K562 (cell line): ENCODE measurements at regions of chr1 and their contacts with region 1.

Region 1: GRCh38 chr1:175154629-175155472 is 37.7 kb downstream of the KIAA0040 start:
- DNase-seq: peak; percentile 71 to 81 (median 80)
- ATAC-seq: peak; percentile 77
- H3K4me3 ChIP-seq: no peak overlapping the region
- H3K27ac ChIP-seq: no peak overlapping the region
- H3K4me1 ChIP-seq: no peaks in the 10 kb centered on the region
- H3K27me3 ChIP-seq: peaks cover 11 to 35% of the 10 kb centered on the region in 2 experiments
- CTCF ChIP-seq: peak; percentile 90 to 96 (median 95)
- EP300 ChIP-seq: no peak
- POLR2A ChIP-seq: no peak
- RAD21 ChIP-seq: peak; percentile 98 to 99

Region 2: GRCh38 chr1:174639461-174639860 is 515.4 kb before region 1 on chr1:
- CTCF ChIA-PET with region 1: no interaction called
- POLR2A ChIA-PET with region 1: no interaction called
- in situ Hi-C with region 1: no loop called
- intact Hi-C with region 1: no loop called
- DNase-seq: no peak
- ATAC-seq: no peak
- H3K4me3 ChIP-seq: no peak overlapping the region
- H3K27ac ChIP-seq: no peak overlapping the region
- H3K4me1 ChIP-seq: no peaks in the 10 kb centered on the region
- H3K27me3 ChIP-seq: no peaks in the 10 kb centered on the region
- CTCF ChIP-seq: no peak
- EP300 ChIP-seq: no peak
- POLR2A ChIP-seq: no peak
- RAD21 ChIP-seq: no peak

Region 3: DNA sequence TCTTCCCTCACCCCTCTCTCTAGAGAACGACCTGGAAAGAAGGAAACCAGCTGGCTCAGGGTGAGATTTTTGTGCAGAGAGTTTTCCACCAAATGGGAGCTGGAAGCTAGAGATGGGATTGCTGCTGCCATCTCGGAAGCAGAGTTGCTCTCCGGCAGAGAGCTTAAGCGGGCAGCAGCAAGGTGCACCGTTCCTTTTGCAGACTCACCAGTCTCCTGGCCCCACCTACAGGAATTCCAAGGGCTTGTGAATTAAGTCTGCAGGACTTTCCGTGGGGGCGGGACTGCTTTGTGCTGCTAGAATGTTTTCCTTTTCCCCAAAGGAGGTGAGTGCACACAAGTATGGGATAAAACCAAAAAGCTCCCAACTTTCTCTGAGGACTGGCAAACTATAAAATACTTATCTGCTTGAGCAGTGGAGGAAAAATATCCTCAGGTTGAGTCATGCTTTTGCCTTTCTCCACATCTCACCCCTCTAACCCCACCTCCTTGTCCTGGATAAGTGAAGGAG is 66.9 kb after region 1 on chr1:
- CTCF ChIA-PET with region 1: interaction called, 28 read pairs
- POLR2A ChIA-PET with region 1: interaction called, 3 read pairs
- in situ Hi-C with region 1: no loop called
- intact Hi-C with region 1: loop called (anchors 1 kb)
- DNase-seq: peak in 2 of 4 experiments; percentile 27 to 43
- ATAC-seq: peak; percentile 80
- H3K4me3 ChIP-seq: no peak overlapping the region
- H3K27ac ChIP-seq: no peak overlapping the region
- H3K4me1 ChIP-seq: peaks cover 0 to 3% of the 10 kb centered on the region in 2 experiments; a peak in 3 of 5 replicates
- H3K27me3 ChIP-seq: peaks cover 3 to 12% of the 10 kb centered on the region in 2 experiments; a peak in 1 of 5 replicates
- CTCF ChIP-seq: peak; percentile 47 to 84 (median 49); a peak in 5 of 6 replicates
- EP300 ChIP-seq: 0 out of 2 replicates have a peak, but pooled peaks have one; percentile 4
- POLR2A ChIP-seq: no peak
- RAD21 ChIP-seq: peak; percentile 73 to 78

Region 4: DNA sequence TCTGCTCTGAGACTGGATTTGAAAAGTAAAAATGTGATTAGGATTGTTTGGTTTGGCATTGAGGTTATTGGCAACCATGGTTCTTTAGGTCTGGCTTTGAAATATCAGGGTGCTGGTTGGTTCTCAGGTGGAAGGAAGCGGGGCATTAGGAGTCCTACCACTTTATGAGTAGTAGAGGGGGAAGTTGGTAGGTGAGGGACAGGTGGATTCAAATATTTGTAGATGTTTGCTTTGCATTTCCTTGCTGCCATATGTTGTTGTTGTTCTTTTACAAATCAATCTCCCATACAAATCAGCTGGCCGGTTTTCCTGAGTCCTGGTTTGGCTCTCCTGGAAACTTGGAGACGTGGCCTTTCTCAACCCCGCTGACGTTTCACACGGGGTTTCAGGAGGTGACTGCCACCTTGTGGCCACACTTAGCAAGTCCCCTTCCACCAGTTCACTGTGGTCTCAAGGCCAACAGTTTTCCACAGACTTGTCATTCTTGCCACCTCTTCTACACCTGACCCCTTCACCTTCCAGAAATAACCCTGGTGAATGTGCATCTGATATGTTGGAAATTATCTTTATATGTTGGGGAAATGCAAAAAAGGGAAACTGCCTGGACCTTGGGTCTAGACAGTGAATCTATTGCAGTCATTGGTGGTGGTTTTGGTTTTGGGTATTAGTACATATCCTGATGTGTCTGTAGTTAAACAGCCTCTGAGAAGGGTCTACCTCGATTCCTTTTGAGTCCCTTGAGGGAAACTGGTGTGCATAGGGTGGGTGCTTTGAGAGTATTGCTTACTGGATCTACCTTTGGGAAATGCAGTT is 164.8 kb after region 1 on chr1:
- CTCF ChIA-PET with region 1: interaction called, 49 read pairs
- POLR2A ChIA-PET with region 1: interaction called, 5 read pairs
- in situ Hi-C with region 1: no loop called
- intact Hi-C with region 1: loop called (anchors 1 kb)
- DNase-seq: peak; percentile 79 to 88 (median 82)
- ATAC-seq: peak; percentile 97
- H3K4me3 ChIP-seq: no peak overlapping the region
- H3K27ac ChIP-seq: no peak overlapping the region
- H3K4me1 ChIP-seq: no peaks in the 10 kb centered on the region
- H3K27me3 ChIP-seq: peaks cover 6 to 22% of the 10 kb centered on the region in 2 experiments; a peak in 3 of 5 replicates
- CTCF ChIP-seq: peak; percentile 84 to 96 (median 94)
- EP300 ChIP-seq: no peak
- POLR2A ChIP-seq: no peak
- RAD21 ChIP-seq: peak; percentile 95 to 97

Region 5: DNA sequence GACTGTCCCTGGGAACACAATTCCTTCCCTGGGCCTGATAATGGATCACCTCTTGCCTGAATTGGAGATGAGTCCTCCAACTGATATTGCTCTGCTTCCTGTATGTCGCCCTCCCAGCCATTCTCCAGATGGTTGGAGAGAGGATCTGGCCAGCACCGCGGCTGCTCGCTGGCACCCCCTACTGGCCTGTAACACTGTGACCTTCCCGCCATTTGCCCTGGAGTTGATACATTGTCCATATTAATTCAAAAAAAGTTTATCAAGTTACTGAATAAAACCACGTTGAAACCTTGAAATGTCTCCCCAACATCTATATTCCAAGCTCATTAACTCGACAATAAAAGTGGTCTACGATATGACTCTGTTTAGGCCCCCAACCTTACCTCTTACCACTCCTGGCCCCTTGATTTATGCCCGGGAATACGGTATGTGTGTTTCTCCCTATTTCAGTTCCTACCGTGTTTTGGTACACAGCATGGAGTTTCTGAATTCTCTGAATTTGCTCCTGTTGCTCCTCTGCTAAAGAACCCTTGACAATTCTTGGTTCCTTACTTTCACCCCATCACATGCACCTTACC is 279.5 kb after region 1 on chr1:
- CTCF ChIA-PET with region 1: no interaction called
- POLR2A ChIA-PET with region 1: no interaction called
- in situ Hi-C with region 1: no loop called
- intact Hi-C with region 1: loop called (anchors 5 kb)
- DNase-seq: peak; percentile 70 to 80 (median 73)
- ATAC-seq: peak; percentile 97
- H3K4me3 ChIP-seq: no peak overlapping the region
- H3K27ac ChIP-seq: no peak overlapping the region
- H3K4me1 ChIP-seq: no peaks in the 10 kb centered on the region
- H3K27me3 ChIP-seq: 0 out of 5 replicates have a peak, but pooled peaks cover 0 to 4% of the 10 kb centered on the region in 2 experiments
- CTCF ChIP-seq: peak; percentile 86 to 97 (median 89)
- EP300 ChIP-seq: no peak
- POLR2A ChIP-seq: no peak
- RAD21 ChIP-seq: peak; percentile 71 to 75

Region 6: GRCh38 chr1:176843352-176844297 is 1688.8 kb after region 1 on chr1:
- CTCF ChIA-PET with region 1: interaction called, 3 read pairs
- POLR2A ChIA-PET with region 1: no interaction called
- in situ Hi-C with region 1: no loop called
- intact Hi-C with region 1: loop called (anchors 2 kb)
- DNase-seq: peak; percentile 19 to 67 (median 34)
- ATAC-seq: peak; percentile 71
- H3K4me3 ChIP-seq: no peak overlapping the region
- H3K27ac ChIP-seq: no peak overlapping the region
- H3K4me1 ChIP-seq: peaks cover 0 to 10% of the 10 kb centered on the region in 2 experiments; a peak in 3 of 5 replicates
- H3K27me3 ChIP-seq: peaks cover 4 to 6% of the 10 kb centered on the region in 2 experiments; a peak in 3 of 5 replicates
- CTCF ChIP-seq: peak; percentile 54 to 87 (median 62); a peak in 5 of 6 replicates
- EP300 ChIP-seq: no peak
- POLR2A ChIP-seq: no peak
- RAD21 ChIP-seq: peak; percentile 94 to 95